HAP-1 (cell line): ENCODE measurements at regions of chr13 and their contacts with region 1.

Region 1: DNA sequence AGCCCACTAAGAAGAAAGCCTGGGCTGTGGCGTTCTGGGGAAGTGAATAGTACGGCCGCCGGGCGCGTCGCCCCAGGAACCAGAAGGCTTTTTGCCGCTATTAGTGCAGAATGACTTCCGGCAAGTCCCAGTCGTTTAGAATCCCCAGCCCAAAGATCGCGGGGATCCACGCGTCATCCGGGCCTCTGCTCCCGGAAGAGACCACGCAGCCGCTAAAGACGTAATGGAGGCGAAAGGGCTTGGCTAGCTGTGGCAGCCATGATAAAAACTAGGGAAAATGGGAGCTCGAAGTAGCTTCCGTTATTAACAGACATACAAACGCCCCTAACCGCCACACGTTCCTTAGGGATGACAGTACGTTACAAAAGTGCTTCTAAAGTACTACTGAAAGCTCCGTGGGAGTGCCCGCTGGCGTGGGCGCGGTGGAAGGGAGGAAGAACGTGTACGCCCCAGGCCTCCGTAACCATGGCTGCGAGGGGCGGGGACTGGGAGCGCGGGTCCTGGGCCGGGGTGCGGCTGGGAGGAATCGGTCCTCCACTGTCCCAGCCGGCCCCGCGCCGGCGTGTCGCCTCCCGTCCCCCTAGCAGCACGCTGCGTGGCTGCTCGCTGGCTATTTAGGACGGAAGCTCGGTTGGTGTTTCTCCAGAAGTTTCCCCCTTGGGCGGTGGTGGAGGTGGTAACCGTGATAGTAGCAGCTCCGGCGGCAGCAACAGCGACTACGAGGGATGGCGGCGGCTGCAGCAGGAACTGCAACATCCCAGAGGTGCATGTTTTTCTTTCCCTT is at the start of gene SUGT1:
- DNase-seq: peak; percentile 94 to 97
- H3K4me3 ChIP-seq: peak within 1 kb of the TSS; percentile 72
- H3K4me1 ChIP-seq: peaks cover 10% of the 10 kb centered on the region
- H3K27me3 ChIP-seq: no peaks in the 10 kb centered on the region

Region 2: GRCh38 chr13:52968074-52968700 is 315.8 kb after region 1 on chr13:
- in situ Hi-C with region 1: loop called (anchors 25 kb)
- DNase-seq: peak; percentile 71 to 84
- H3K4me3 ChIP-seq: no peak overlapping the region
- H3K4me1 ChIP-seq: no peaks in the 10 kb centered on the region
- H3K27me3 ChIP-seq: peaks cover 30% of the 10 kb centered on the region